Naive thymus-derived CD4-positive, alpha-beta T cell (primary cell): ENCODE measurements at regions of chr10 and their contacts with region 1.

Region 1: DNA sequence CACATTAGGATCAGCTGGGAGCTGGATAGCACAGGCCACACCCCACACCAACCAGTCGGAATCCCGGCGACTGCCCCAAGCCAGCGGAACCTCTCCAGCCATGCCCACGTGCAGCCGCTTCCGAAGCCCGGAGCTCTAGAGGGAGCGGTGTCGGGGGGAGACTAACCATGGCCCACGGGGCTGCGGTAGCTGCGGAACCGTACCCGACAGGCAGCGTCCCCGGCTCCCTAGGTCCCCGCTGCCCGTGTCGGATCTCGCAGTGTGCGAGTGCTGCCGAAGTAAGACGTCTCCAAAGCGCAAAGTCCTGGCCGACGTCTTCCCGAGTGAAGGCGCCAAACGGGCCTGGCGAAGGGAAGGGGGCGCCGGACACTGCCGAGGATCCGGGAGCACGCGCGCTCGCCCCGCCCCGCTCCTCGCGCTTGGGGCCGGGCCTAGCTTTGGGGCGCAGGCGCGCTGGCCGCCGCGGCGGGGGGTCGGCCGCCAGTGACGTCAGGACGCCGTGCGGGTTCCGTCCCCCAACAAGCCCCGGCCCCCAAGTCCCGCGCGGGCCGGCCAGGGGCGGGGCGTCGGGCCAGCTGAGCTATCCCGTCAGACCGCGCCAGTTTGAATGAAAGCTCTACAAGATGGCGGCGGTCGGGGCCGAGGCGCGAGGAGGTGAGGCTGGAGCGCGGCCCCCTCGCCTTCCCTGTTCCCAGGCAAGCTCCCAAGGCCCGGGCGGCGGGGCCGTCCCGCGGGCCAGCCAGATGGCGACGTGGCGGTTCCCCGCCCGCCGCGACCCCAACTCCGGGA is at the start of gene SUV39H2:
- DNase-seq: peak; percentile 81 to 97 (median 87)
- ATAC-seq: peak; percentile 93
- H3K4me3 ChIP-seq: peak within 1 kb of the TSS; percentile 92
- H3K4me3 Mint-ChIP-seq: peak within 1 kb of the TSS; percentile 92 to 97 (median 94)
- H3K27ac ChIP-seq: peak within 1 kb of the TSS; percentile 87
- H3K27ac Mint-ChIP-seq: peak within 1 kb of the TSS; percentile 71 to 94 (median 91)
- H3K4me1 ChIP-seq: peaks cover 4 to 7% of the 10 kb centered on the region in 2 donors
- H3K4me1 Mint-ChIP-seq: peaks cover 7 to 46% (median 41%) of the 10 kb centered on the region in 7 donors
- H3K27me3 ChIP-seq: no peaks in the 10 kb centered on the region
- H3K27me3 Mint-ChIP-seq: no peaks in the 10 kb centered on the region
- total RNA-seq, gene SUV39H2: 2.4 to 25.0 (median 6.8) TPM

Region 2: DNA sequence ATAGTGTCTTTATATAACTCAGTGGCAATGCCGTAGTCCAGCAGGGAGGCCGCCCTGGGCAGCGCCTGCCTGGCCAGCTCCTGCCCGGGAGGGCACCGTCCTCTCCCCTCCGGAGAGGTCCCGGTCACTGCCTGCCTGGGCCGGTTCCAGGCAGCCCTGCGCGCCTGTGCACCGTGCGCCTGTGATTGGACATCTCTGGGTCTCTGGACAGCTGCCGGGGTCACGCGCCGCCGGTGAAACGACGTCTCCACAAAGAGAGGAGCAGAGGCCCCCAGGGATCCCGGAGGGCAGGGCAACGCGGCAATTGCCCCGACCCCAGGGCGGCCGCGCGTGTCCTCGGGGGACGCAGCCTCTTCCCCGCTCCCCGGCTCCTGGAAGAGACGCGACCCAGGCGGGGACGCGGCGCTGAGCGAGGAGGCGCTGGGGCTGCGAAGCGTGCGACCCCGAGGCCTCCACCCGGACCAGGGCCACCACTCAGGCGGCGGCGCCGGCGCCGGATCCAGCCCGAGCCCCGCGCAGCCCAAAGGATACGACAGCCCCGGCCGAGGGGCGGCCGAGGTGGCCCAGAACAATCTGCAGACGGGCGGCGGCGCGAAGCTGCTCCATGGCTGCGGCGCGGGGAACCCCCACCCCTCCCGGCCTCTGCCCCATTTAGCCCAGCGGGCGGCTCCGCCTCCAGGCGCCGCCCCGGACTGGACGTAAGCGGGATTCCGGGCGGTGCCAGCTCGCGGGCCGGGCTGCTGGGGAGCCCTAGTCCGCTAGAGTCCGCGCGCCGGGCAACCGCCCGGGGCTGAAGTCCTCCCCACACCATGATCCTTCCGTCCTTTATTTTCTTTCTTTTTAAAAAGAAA is 1578.8 kb before region 1 on chr10 and contains the start of gene PHYH:
- CTCF ChIA-PET with region 1: no interaction called
- POLR2A ChIA-PET with region 1: no interaction called
- intact Hi-C with region 1: loop called in 1 of 2 experiments (anchors 5 kb)
- DNase-seq: peak; percentile 70 to 88 (median 78)
- ATAC-seq: peak; percentile 77
- H3K4me3 ChIP-seq: peak within 1 kb of the TSS; percentile 69
- H3K4me3 Mint-ChIP-seq: peak within 1 kb of the TSS; percentile 70 to 96 (median 86)
- H3K27ac ChIP-seq: peak within 1 kb of the TSS; percentile 95
- H3K27ac Mint-ChIP-seq: peak within 1 kb of the TSS; percentile 92 to 99 (median 97)
- H3K4me1 ChIP-seq: peaks cover 16 to 19% of the 10 kb centered on the region in 2 donors
- H3K4me1 Mint-ChIP-seq: peaks cover 13 to 34% (median 22%) of the 10 kb centered on the region in 7 donors
- H3K27me3 ChIP-seq: no peaks in the 10 kb centered on the region
- H3K27me3 Mint-ChIP-seq: no peaks in the 10 kb centered on the region
- total RNA-seq, gene PHYH: 11.2 to 17.7 (median 13.2) TPM

Region 3: DNA sequence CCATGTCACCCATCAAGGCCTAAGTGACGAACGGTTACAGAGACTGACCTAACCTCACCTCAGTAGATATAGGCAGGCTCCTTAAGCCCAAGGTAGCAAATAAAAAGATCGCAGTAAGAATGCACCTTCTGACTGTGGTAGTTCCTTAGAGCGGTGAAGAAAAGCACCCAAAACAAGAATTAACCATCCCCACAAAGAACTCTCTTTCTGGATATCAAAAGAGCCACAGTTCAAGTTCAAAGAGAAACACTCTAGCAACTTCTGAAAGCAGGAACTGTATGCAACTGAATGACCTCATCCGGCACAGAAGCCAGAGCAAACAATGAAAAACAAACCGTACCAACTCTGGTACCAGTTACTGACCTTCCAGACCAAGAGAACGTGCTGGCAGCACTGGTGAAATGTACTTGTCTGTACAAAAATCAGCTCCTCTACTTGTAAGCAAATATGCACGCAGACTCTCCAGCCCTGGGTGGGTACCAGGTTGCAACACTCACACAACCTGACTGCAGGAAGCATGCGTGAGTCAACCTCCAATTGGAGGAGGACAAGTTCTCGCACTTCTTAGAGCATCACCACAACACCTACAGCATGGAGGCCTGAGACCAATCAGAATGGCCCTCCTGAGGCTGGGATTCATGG is 306.5 kb before region 1 on chr10:
- CTCF ChIA-PET with region 1: no interaction called
- POLR2A ChIA-PET with region 1: interaction called, 4 read pairs
- intact Hi-C with region 1: loop called in 1 of 2 experiments (anchors 1 kb)
- DNase-seq: peak in 8 of 9 donors; percentile 47 to 94 (median 90)
- ATAC-seq: peak; percentile 80
- H3K4me3 ChIP-seq: peak overlapping the region; percentile 67
- H3K4me3 Mint-ChIP-seq: peak overlapping the region; percentile 86 to 98 (median 96)
- H3K27ac ChIP-seq: peak overlapping the region; percentile 87
- H3K27ac Mint-ChIP-seq: peak overlapping the region; percentile 93 to 100 (median 99)
- H3K4me1 ChIP-seq: peaks cover 40 to 53% of the 10 kb centered on the region in 2 donors
- H3K4me1 Mint-ChIP-seq: peaks cover 42 to 88% (median 79%) of the 10 kb centered on the region in 7 donors
- H3K27me3 ChIP-seq: no peaks in the 10 kb centered on the region
- H3K27me3 Mint-ChIP-seq: no peaks in the 10 kb centered on the region

Region 4: GRCh38 chr10:14904316-14904732 is 25.9 kb after region 1 on chr10:
- CTCF ChIA-PET with region 1: interaction called, 6 read pairs
- POLR2A ChIA-PET with region 1: interaction called, 3 read pairs
- intact Hi-C with region 1: loop called in 1 of 2 experiments (anchors 1 kb)
- DNase-seq: peak in 7 of 9 donors; percentile 11 to 57 (median 41)
- ATAC-seq: peak; percentile 81
- H3K4me3 ChIP-seq: no peak overlapping the region
- H3K4me3 Mint-ChIP-seq: no peak overlapping the region
- H3K27ac ChIP-seq: no peak overlapping the region
- H3K27ac Mint-ChIP-seq: peak overlapping the region in 3 of 9 donors; percentile 48 to 73 (median 62)
- H3K4me1 ChIP-seq: peaks cover 0 to 4% of the 10 kb centered on the region in 2 donors
- H3K4me1 Mint-ChIP-seq: peaks cover 0 to 22% (median 11%) of the 10 kb centered on the region in 7 donors
- H3K27me3 ChIP-seq: no peaks in the 10 kb centered on the region
- H3K27me3 Mint-ChIP-seq: no peaks in the 10 kb centered on the region

Region 5: GRCh38 chr10:14959276-14960057 is 81.0 kb after region 1 on chr10 and contains the start of gene MEIG1:
- CTCF ChIA-PET with region 1: interaction called, 3 read pairs
- POLR2A ChIA-PET with region 1: interaction called, 8 read pairs
- intact Hi-C with region 1: loop called (anchors 1 kb)
- DNase-seq: peak; percentile 82 to 99 (median 90)
- ATAC-seq: peak; percentile 93
- H3K4me3 ChIP-seq: peak within 1 kb of the TSS; percentile 97
- H3K4me3 Mint-ChIP-seq: peak within 1 kb of the TSS; percentile 91 to 99 (median 96)
- H3K27ac ChIP-seq: peak within 1 kb of the TSS; percentile 81
- H3K27ac Mint-ChIP-seq: peak within 1 kb of the TSS; percentile 93 to 98 (median 96)
- H3K4me1 ChIP-seq: peaks cover 8 to 10% of the 10 kb centered on the region in 2 donors
- H3K4me1 Mint-ChIP-seq: peaks cover 6 to 42% (median 34%) of the 10 kb centered on the region in 7 donors
- H3K27me3 ChIP-seq: no peaks in the 10 kb centered on the region
- H3K27me3 Mint-ChIP-seq: no peaks in the 10 kb centered on the region
- total RNA-seq, gene MEIG1: 1.2 to 1.9 TPM in 2 of 5 experiments, not detected in the others

Region 6: DNA sequence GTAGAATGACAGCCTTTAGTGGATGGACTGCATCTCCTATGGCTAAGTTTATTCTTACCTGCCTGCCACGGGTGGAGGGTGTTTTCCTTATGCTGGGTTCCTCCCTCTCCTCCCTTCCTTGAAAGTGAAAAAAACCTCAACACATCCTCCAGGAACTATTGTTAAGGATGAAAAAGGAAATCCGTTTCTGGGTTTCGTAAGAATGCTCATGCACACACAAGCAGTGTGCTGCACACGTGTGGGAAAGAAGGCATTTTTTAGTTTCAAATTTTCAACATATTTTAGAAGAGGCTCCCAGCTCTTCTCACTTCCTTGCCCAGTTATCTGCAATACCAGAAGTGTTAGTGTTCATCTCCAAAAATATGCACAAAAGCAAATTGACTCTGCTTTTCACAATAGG is 402.0 kb after region 1 on chr10:
- CTCF ChIA-PET with region 1: no interaction called
- POLR2A ChIA-PET with region 1: no interaction called
- intact Hi-C with region 1: no loop called
- DNase-seq: no peak
- ATAC-seq: no peak
- H3K4me3 ChIP-seq: no peak overlapping the region
- H3K4me3 Mint-ChIP-seq: no peak overlapping the region
- H3K27ac ChIP-seq: no peak overlapping the region
- H3K27ac Mint-ChIP-seq: no peak overlapping the region
- H3K4me1 ChIP-seq: no peaks in the 10 kb centered on the region
- H3K4me1 Mint-ChIP-seq: peaks cover 0 to 1% (median 0%) of the 10 kb centered on the region in 7 donors
- H3K27me3 ChIP-seq: no peaks in the 10 kb centered on the region
- H3K27me3 Mint-ChIP-seq: peaks cover 0 to 12% (median 0%) of the 10 kb centered on the region in 5 donors

Region 7: GRCh38 chr10:15370856-15371701 is 492.6 kb after region 1 on chr10 and contains the start of gene FAM171A1:
- CTCF ChIA-PET with region 1: no interaction called
- POLR2A ChIA-PET with region 1: no interaction called
- intact Hi-C with region 1: loop called in 1 of 2 experiments (anchors 2 kb)
- DNase-seq: peak; percentile 37 to 71 (median 62)
- ATAC-seq: peak; percentile 91
- H3K4me3 ChIP-seq: peak within 1 kb of the TSS; percentile 47
- H3K4me3 Mint-ChIP-seq: peak within 1 kb of the TSS; percentile 59 to 92 (median 83)
- H3K27ac ChIP-seq: peak within 1 kb of the TSS; percentile 21
- H3K27ac Mint-ChIP-seq: peak within 1 kb of the TSS in 8 of 9 donors; percentile 18 to 89 (median 62)
- H3K4me1 ChIP-seq: peaks cover 3 to 5% of the 10 kb centered on the region in 2 donors
- H3K4me1 Mint-ChIP-seq: peaks cover 4 to 12% (median 5%) of the 10 kb centered on the region in 7 donors
- H3K27me3 ChIP-seq: peaks cover 0 to 9% of the 10 kb centered on the region in 2 donors
- H3K27me3 Mint-ChIP-seq: peaks cover 0 to 81% (median 6%) of the 10 kb centered on the region in 5 donors
- total RNA-seq, gene FAM171A1: 3.2 to 8.0 (median 4.9) TPM